H1 (cell line): ENCODE measurements at regions of chr12 and their contacts with region 1.

Region 1: DNA sequence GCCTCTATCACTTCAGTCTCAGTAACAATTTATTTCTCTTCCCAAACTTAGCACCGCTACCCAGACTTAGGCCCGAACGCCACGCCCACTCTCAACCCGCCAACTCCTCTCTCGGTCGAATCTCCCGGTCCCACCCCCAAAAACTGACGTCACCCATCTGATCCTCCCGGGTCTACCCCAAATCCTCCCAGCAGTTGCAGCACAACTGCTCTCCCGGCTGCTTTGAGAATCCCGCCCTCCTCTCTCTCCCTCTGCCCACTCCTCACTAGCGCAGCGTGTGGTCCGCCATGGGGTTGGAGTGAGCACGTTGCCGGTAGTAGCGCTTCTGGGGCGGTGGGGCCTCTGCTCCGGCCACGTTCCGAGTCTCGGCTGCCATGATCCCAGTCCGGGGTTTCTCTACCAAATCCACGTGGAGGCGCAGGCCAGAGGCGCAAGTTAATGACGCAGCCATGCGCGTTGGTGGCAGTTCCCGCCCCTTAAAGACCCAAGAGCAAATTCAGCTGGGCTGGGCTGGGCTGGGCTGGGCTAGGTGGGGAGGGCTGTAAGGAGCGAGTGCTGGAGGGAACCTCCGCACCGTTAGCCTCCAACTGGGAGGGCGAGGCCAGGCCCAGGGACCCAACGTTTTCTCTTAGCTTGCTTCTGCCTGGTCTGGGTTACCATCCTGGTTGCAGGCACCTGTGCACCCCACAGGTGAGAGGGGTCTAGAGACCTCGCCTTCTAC is at the start of gene METTL1:
- DNase-seq: peak; percentile 91 to 96
- H3K4me3 ChIP-seq: peak within 1 kb of the TSS; percentile 79 to 99 (median 95)
- H3K27ac ChIP-seq: peak within 1 kb of the TSS; percentile 99
- H3K4me1 ChIP-seq: peaks cover 3 to 10% (median 5%) of the 10 kb centered on the region in 4 experiments; a peak in 5 of 7 replicates
- H3K27me3 ChIP-seq: peaks cover 0 to 7% (median 3%) of the 10 kb centered on the region in 4 experiments; a peak in 4 of 7 replicates
- CTCF ChIP-seq: peak in 1 of 3 experiments; percentile 1; a peak in 1 of 4 replicates
- EP300 ChIP-seq: 0 out of 3 replicates have a peak, but pooled peaks of 1 of the 2 experiments have one; percentile 66
- POLR2A ChIP-seq: peak in 1 of 2 experiments; percentile 98; a peak in 2 of 3 replicates
- RAD21 ChIP-seq: no peak
- total RNA-seq, gene METTL1: 41.9 and 46.0 TPM in 2 replicates

Region 2: DNA sequence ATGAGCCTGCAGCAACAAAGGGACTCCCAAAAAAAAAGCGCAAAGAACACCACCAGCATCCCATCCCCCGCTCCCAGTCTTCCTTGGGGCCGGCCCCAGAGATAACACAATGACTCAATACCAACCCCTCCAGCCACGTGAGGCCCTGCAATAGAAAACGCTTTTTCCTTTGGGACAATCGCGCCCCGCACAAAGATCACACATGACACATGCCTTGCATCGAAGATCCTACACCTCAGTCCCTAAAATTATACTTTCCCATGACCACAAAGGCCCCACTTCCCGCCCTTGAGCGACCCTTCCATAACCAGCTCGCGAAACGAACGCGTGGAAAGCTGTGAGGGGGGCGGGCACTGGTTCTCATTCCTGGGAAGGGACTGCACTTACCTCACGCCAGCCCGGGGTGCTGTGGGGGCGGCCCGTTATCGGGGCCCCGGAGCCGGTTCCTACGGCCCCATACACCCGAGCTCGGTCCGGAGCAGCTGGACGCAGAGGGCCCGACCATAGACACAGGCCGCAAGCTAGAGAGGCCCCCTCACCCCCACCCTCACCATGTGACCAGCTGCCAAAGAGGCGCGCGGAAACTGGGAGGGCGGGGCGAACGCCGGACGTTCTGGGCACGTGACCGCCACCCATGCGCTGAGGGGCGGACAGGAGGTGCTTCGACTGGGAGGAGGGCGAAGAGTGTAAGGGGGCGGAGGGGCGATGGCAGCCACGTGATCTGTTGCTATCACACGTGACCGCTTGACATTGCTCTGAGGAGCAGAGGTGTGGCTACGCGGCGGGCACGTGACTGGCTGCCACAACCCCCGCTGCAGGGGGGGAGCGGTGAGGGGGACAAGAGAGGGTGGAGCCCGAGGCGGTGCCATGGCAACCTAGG is 19.8 kb before region 1 on chr12 and contains the start of gene CDK4:
- CTCF ChIA-PET with region 1: interaction called, 40 read pairs
- POLR2A ChIA-PET with region 1: interaction called, 23 read pairs
- DNase-seq: peak; percentile 99 to 100
- H3K4me3 ChIP-seq: peak within 1 kb of the TSS; percentile 96 to 99 (median 98)
- H3K27ac ChIP-seq: peak within 1 kb of the TSS; percentile 86
- H3K4me1 ChIP-seq: peaks cover 3 to 26% (median 7%) of the 10 kb centered on the region in 4 experiments; a peak in 6 of 7 replicates
- H3K27me3 ChIP-seq: peaks cover 8 to 22% (median 20%) of the 10 kb centered on the region in 4 experiments
- CTCF ChIP-seq: no peak
- EP300 ChIP-seq: peak in 1 of 2 experiments; percentile 76; a peak in 1 of 3 replicates
- POLR2A ChIP-seq: peak; percentile 79
- RAD21 ChIP-seq: no peak
- total RNA-seq, gene CDK4: 174 and 180 TPM in 2 replicates

Region 3: DNA sequence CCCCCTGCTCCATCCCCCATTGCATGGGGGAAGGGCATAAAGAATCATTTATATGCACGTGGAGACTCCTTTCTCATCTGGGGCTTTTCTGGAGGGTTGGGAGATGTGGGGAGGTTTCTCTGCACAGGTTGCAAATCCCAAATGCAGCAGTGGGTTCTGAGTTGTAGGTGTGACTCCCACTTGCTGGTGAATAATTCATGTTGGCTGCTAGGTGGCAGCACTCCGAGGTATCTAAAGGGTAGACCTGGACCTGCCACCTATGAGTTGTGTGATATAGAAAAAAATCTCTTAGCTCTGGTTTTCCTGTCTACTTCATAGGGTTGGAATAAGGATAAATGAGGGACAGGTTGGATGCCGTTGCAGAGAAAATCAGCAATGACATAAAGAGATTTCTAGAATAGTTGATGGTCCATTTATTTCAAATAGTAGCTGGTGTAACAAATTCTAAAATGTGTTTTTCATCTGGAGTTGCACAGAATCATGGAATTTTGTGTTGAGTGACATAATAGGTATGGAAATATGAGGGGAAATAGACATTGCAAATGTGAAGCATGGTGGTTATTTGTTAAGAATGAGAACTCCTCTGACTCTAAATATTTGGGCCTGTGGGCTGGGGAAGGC is 12.4 kb before region 1 on chr12:
- CTCF ChIA-PET with region 1: interaction called, 40 read pairs
- POLR2A ChIA-PET with region 1: interaction called, 23 read pairs
- DNase-seq: no peak
- H3K4me3 ChIP-seq: no peak overlapping the region
- H3K27ac ChIP-seq: no peak overlapping the region
- H3K4me1 ChIP-seq: peaks cover 0 to 9% (median 6%) of the 10 kb centered on the region in 4 experiments; a peak in 6 of 7 replicates
- H3K27me3 ChIP-seq: peaks cover 12 to 41% (median 33%) of the 10 kb centered on the region in 4 experiments
- CTCF ChIP-seq: peak; percentile 47 to 66 (median 59)
- EP300 ChIP-seq: no peak
- POLR2A ChIP-seq: no peak
- RAD21 ChIP-seq: peak in 1 of 2 experiments; percentile 7; a peak in 1 of 4 replicates